WTC11 (cell line): ENCODE measurements at regions of chr11 and their contacts with region 1.

Region 1: DNA sequence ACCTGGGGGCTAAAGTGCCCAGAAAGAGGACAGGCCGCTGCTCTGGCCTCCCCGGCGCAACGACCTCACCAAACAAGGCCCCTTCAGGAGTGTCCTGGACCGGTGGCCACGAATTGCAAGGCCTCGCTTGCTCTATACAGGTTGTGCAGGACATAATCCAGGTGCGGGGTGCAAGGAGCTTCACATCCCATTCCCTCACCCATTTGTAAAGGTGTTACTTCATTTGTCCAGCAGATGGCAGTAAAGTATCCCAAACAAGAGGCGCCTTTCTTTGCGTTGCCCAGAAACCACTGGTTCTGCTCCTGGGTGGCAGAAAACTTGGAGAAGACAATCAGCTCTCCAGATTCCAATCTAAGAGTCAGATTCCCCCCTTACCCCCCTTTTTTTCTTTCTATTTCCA is 35.9 kb upstream of the PRDM11 start:
- DNase-seq: no peak
- ATAC-seq: peak; percentile 78
- H3K4me3 Mint-ChIP-seq: no peak overlapping the region
- H3K27ac Mint-ChIP-seq: no peak overlapping the region
- H3K4me1 Mint-ChIP-seq: no peaks in the 10 kb centered on the region
- H3K27me3 Mint-ChIP-seq: peaks cover 17% of the 10 kb centered on the region
- CTCF ChIP-seq: peak; percentile 66

Region 2: DNA sequence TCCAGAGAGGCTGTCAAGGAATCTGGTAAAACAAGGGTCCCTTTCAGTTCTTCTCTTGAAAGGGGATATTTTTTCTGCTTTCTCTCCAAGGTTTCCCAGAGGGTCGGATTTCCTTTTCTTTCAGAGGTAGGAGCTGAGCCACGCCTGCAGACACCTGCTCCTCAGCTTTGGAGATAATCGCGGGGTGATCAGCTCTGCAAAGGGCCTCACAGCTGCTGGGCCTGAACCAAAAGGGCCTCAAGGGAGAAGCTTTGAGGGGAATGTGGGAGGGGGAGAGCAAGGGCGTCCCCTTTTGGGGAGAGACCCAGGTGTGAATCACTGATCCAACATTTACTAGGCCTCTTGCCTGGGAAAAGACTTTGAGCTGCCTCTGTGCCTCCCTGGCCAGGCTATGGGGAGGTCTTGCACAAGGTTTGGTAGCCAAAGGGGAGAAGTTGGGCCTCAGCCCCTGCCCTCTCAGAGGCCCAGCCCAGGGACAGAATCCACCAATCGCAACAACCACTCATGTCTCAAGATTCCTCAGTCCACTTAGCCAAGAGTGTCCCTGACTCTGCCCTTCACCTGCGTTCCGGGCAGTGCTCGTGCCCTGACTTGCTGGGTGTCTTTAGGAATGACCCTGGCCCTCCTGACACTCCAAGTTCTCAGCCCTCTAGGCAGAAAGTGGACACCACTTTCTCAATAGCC is 145.9 kb before region 1 on chr11:
- CTCF ChIA-PET with region 1: interaction called, 13 read pairs
- POLR2A ChIA-PET with region 1: no interaction called
- DNase-seq: no peak
- ATAC-seq: peak; percentile 27
- H3K4me3 Mint-ChIP-seq: no peak overlapping the region
- H3K27ac Mint-ChIP-seq: 0 out of 2 replicates have a peak overlapping the region, but pooled peaks have one; percentile 49
- H3K4me1 Mint-ChIP-seq: peaks cover 53% of the 10 kb centered on the region
- H3K27me3 Mint-ChIP-seq: no peaks in the 10 kb centered on the region
- CTCF ChIP-seq: no peak

Region 3: DNA sequence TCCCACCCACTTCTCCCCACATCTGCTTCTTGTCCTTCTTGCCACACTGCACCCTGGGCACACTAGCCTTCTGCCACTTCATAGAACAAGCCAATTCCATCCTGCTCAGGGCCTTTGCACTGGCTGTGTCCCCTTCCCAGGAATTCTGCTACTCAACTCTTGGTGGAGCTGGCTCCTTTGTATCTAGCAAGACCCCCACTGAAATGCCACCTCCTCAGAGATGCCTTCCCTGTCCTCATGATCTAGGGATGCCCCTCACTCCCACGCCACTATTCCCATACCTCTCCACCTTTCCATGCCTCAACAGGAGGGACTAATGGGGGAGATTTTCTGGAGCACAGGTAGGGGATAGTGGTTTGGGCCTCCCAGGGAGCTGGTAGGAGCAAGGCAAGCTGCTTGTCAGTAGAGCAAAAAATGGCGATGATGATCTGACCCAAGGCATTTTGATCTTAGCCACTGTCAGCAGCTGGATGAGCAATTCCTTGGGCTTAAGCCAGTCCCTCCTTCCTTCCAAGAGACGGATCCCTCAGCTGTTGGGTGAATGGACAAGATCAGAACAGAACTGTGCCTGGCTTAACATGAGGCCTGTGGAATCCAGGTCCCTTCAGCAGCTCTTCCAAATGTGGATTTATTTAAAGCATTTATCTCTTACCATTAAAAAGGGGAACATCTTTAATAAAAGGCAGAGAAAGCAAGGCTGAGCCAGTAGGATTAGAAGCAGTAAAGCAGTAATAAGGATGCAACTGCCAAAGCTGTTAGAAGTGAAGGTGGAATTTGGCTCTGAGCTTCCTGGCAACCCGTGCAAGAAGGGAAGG is 31.9 kb after region 1 on chr11:
- CTCF ChIA-PET with region 1: interaction called, 17 read pairs
- POLR2A ChIA-PET with region 1: no interaction called
- DNase-seq: no peak
- ATAC-seq: no peak
- H3K4me3 Mint-ChIP-seq: no peak overlapping the region
- H3K27ac Mint-ChIP-seq: no peak overlapping the region
- H3K4me1 Mint-ChIP-seq: peaks cover 8% of the 10 kb centered on the region
- H3K27me3 Mint-ChIP-seq: peaks cover 75% of the 10 kb centered on the region
- CTCF ChIP-seq: no peak

Region 4: GRCh38 chr11:45225961-45226871 is 115.7 kb after region 1 on chr11:
- CTCF ChIA-PET with region 1: interaction called, 12 read pairs
- POLR2A ChIA-PET with region 1: no interaction called
- DNase-seq: no peak
- ATAC-seq: no peak
- H3K4me3 Mint-ChIP-seq: no peak overlapping the region
- H3K27ac Mint-ChIP-seq: no peak overlapping the region
- H3K4me1 Mint-ChIP-seq: no peaks in the 10 kb centered on the region
- H3K27me3 Mint-ChIP-seq: no peaks in the 10 kb centered on the region
- CTCF ChIP-seq: no peak

Region 5: DNA sequence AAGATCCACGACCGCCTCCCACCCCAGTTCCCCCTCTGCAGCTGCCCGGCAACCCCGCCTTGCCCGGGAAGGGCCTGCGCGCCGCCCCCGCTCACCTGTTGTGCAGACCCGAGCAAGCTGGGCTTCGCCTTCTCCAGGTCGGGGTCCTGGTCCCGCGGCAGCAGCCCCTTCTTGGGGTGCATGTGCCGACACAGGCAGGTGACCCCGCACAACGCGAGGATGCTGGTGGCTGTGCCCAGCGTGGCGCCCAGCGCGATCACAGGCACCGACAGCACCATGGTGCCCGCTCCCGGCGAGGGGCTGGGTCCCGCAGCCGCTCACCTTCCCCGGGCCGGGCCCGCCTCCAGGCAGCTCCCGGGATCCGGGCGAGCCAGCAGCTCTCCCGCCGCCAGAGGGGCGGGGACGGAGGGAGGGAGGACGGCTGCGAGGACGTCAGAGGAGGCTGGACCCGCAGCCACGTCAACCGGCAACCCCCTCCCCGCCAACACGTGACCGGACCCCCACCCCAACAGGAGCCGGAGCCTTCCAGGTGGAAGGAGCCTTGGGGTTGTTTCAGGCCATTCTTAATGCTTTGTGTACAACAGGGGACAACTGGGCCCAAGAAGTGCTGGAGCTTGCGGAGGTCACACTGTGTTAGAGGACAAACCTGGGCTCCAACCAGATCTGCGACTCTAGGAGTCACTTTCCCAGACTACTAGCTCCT is 175.5 kb after region 1 on chr11 and contains the start of gene SYT13:
- CTCF ChIA-PET with region 1: interaction called, 34 read pairs
- POLR2A ChIA-PET with region 1: no interaction called
- DNase-seq: peak; percentile 89
- ATAC-seq: peak; percentile 92
- H3K4me3 Mint-ChIP-seq: peak within 1 kb of the TSS; percentile 72
- H3K27ac Mint-ChIP-seq: 0 out of 2 replicates have a peak within 1 kb of the TSS, but pooled peaks have one; percentile 3
- H3K4me1 Mint-ChIP-seq: peaks cover 20% of the 10 kb centered on the region
- H3K27me3 Mint-ChIP-seq: peaks cover 75% of the 10 kb centered on the region
- CTCF ChIP-seq: no peak
- total RNA-seq, gene SYT13: 10.8 to 15.1 TPM (median 12.0 TPM) in 3 replicates